ENCODE measurements at regions of chr15 and their contacts with region 1.

Region 1: DNA sequence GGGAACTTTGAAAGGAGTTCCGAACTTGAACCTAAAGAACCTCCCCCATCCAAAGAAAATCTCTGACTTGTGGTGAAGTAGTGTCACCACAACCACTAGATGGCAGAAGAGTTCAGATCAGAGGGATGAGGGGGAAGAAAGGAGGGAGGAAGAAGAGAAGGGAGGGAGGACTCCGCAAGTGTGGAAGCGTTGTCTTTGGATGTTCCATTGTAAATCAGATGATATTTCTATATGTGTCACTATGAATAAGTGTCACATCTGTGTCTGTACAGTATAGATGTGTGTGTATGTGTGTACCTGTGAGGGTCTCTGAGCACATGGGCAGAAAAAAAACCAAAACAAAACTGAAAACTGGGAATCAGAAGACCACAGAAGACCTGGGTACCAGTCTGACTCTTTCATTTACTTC is 16.9 kb downstream of the SLC24A1 start:
- DNase-seq: peak in 1 of 2 donors; percentile 10
- H3K4me3 ChIP-seq: no peak overlapping the region
- H3K27ac ChIP-seq: no peak overlapping the region
- H3K4me1 ChIP-seq: peaks cover 0 to 10% of the 10 kb centered on the region in 2 donors
- H3K27me3 ChIP-seq: no peaks in the 10 kb centered on the region
- CTCF ChIP-seq: peak; percentile 51 to 94 (median 82)
- POLR2A ChIP-seq: no peak

Region 2: DNA sequence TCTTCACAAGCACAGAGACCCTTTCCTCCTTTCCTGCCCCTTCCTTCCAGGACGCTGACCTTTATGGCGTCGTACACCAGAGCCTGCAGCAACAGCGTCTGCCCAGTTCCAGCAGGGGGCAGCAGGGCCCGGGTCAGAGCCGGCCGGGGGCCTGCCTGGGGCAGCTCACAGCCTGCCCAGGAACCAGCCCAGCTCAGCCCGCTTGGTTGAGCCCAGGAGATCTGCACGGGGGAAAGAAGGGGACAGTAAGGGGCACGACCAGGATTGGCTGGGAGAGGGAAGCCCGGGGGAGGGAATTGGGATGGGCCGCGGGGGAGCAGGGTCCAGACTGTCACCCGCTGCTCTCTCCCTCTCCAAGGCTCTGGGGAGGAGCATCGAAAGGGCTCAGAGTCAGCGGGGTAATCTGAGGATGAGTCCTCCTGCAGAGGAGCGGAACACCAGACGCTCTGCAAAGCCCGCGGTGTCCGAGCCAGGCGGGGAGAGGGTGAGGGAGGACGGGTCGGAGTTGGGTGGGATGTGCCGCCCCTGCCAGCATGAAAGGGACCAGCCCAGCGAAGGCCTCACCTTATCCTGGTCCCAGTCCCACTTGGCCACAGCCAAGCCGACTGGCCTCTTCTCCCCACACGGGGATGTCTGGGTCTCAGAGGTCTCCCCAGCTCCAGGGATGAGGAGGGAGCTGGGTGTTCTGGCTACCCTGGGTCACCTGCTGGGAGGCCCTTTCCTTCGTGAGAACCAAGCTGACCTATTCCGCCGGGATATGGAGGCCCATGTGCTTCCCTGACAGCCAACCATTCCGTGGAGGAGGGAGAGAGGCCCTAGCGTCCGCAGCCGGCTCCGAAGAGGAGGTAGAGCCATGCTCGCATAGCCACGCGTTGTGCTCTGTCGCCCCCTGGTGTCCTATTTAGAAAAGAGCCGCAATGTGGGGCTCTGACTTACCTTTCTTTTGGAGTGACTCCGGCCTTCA is 253.5 kb before region 1 on chr15:
- intact Hi-C with region 1: no loop called
- DNase-seq: peak; percentile 87 to 89
- H3K4me3 ChIP-seq: peak overlapping the region in 1 of 3 donors; percentile 12
- H3K27ac ChIP-seq: peak overlapping the region in 2 of 3 donors; percentile 16 to 38
- H3K4me1 ChIP-seq: peaks cover 9 to 16% of the 10 kb centered on the region in 2 donors
- H3K27me3 ChIP-seq: no peaks in the 10 kb centered on the region
- CTCF ChIP-seq: peak; percentile 66 to 93 (median 90)
- POLR2A ChIP-seq: no peak

Region 3: DNA sequence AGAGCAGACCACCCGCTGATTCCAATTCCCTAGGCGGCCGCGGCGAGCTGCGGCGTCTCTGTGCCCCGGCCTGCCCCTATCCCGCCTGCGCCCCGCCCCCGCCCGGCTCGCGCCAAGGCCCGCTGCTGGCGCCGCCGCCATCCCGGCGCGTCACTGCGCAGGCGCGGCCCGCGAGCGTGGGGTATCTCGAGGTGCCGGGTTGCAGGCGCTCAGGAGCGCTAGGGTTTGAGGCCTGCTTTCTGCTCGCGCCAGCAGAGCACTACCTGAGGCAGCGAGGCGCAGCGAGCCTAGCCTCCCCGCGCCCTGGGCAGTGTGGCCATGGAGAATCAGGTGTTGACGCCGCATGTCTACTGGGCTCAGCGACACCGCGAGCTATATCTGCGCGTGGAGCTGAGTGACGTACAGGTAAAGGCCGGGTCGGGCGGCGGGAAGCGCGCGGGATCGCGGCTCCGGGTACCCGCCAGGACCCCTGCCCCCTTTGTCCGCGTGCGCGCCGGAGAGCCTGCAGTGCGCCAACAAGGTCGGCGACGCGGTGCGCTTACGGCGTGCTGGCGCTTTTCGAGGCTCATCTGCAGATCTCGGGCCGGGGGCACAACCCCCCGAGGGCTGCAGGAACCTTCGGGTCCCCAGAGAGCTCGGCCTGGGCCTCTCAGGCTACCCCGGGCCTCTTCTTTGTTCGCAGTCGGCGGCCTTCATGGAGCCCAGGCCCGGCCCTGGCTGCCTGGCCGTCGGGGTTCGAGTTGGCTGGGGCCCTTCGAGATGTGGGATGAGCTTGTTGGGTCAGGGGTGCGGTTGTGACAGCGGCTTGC is 108.2 kb before region 1 on chr15 and contains the start of gene HACD3:
- intact Hi-C with region 1: no loop called
- DNase-seq: peak; percentile 89 to 90
- H3K4me3 ChIP-seq: peak within 1 kb of the TSS; percentile 37 to 85 (median 77)
- H3K27ac ChIP-seq: peak within 1 kb of the TSS; percentile 75 to 79 (median 78)
- H3K4me1 ChIP-seq: peaks cover 9 to 17% of the 10 kb centered on the region in 2 donors
- H3K27me3 ChIP-seq: no peaks in the 10 kb centered on the region
- CTCF ChIP-seq: no peak
- POLR2A ChIP-seq: peak in 1 of 2 donors; percentile 77
- total RNA-seq, gene HACD3: 103 to 172 (median 128) TPM

Region 4: GRCh38 chr15:65824031-65824743 is 185.5 kb after region 1 on chr15:
- intact Hi-C with region 1: loop called (anchors 10 kb)
- DNase-seq: peak; percentile 55 to 60
- H3K4me3 ChIP-seq: no peak overlapping the region
- H3K27ac ChIP-seq: no peak overlapping the region
- H3K4me1 ChIP-seq: peaks cover 0 to 22% of the 10 kb centered on the region in 2 donors
- H3K27me3 ChIP-seq: no peaks in the 10 kb centered on the region
- CTCF ChIP-seq: peak; percentile 36 to 64 (median 56)
- POLR2A ChIP-seq: no peak